Naive thymus-derived CD4-positive, alpha-beta T cell (primary cell): ENCODE measurements at regions of chr3 and their contacts with region 1.

Region 1: GRCh38 chr3:146682171-146682570 is 77.0 kb upstream of the PLSCR5 start:
- DNase-seq: no peak
- ATAC-seq: no peak
- H3K4me3 ChIP-seq: no peak overlapping the region
- H3K4me3 Mint-ChIP-seq: no peak overlapping the region
- H3K27ac ChIP-seq: no peak overlapping the region
- H3K27ac Mint-ChIP-seq: no peak overlapping the region
- H3K4me1 ChIP-seq: no peaks in the 10 kb centered on the region
- H3K4me1 Mint-ChIP-seq: no peaks in the 10 kb centered on the region
- H3K27me3 ChIP-seq: no peaks in the 10 kb centered on the region
- H3K27me3 Mint-ChIP-seq: peaks cover 0 to 8% (median 0%) of the 10 kb centered on the region in 5 donors

Region 2: DNA sequence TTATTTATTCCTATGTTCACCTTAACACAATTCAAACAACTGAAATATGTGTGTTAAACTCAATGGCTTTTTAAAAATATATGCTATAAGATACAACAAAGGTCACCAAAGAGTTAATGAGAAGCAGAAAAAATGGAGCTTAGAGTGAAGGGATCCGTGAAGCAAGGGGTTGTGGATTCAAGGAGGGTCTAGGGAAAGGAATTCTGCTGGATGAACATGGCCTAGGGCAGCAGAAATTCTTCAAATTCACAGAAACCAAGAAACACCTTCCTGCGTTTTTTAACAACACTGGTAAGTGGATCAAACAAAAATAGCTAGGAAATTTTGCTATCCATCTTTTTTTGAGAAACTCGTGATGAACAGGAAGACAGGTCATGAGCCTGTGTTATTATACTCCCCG is 17.8 kb before region 1 on chr3:
- CTCF ChIA-PET with region 1: no interaction called
- POLR2A ChIA-PET with region 1: no interaction called
- intact Hi-C with region 1: loop called in 1 of 2 experiments (anchors 1 kb)
- DNase-seq: no peak
- ATAC-seq: no peak
- H3K4me3 ChIP-seq: no peak overlapping the region
- H3K4me3 Mint-ChIP-seq: no peak overlapping the region
- H3K27ac ChIP-seq: no peak overlapping the region
- H3K27ac Mint-ChIP-seq: no peak overlapping the region
- H3K4me1 ChIP-seq: no peaks in the 10 kb centered on the region
- H3K4me1 Mint-ChIP-seq: no peaks in the 10 kb centered on the region
- H3K27me3 ChIP-seq: no peaks in the 10 kb centered on the region
- H3K27me3 Mint-ChIP-seq: peaks cover 0 to 4% (median 0%) of the 10 kb centered on the region in 5 donors

Region 3: GRCh38 chr3:147000274-147000673 is 318.1 kb after region 1 on chr3:
- CTCF ChIA-PET with region 1: no interaction called
- POLR2A ChIA-PET with region 1: no interaction called
- intact Hi-C with region 1: no loop called
- DNase-seq: no peak
- ATAC-seq: no peak
- H3K4me3 ChIP-seq: no peak overlapping the region
- H3K4me3 Mint-ChIP-seq: no peak overlapping the region
- H3K27ac ChIP-seq: no peak overlapping the region
- H3K27ac Mint-ChIP-seq: no peak overlapping the region
- H3K4me1 ChIP-seq: no peaks in the 10 kb centered on the region
- H3K4me1 Mint-ChIP-seq: no peaks in the 10 kb centered on the region
- H3K27me3 ChIP-seq: no peaks in the 10 kb centered on the region
- H3K27me3 Mint-ChIP-seq: no peaks in the 10 kb centered on the region